ENCODE measurements at regions of chr7 and their contacts with region 1.

Region 1: DNA sequence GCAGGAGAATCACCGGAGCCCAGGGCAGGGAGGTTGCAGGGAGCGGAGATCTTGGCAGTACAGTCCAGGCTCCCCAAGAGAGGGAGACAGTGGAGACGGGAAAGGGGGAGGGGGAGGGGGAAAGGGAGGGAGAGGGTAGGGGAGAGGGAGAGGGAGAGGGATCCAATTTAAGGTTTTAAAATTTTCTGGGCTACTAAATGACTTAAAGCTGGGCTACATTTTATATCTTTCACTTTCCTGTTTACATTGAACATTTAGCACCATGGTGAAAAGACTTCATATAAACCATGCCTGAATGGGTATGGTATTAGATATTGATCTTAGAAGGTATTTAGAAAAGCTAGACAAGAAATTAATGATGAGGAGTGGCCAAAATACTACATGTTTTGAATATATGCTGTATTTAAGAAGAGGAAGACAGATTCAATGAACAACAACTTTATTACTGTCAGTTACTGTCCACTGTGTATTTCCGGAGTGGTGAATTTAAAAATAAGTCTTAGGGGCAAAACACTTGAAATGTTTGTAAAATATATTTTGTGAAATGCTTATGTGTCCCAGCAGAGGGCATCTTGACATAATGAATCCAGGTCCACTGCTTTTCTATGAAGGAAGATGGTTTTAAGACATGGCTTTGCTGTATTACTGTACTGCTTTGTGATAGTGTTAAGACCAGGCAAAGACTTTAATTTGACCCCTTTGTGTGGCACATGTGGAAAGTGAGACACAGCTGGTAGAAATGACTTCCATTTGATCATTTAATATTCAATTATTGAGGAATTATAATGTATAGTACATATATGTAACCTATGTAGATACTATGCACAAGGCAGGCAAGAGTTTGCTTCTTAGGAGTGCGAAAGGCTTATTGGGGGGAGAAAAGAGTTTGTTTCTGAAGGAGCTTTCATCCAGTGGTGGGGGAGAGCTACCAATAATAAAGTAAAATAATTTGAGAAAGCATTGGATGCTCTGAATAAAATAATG is 52.8 kb downstream of the NRF1 start:
- DNase-seq: no peak
- H3K4me3 ChIP-seq: no peak overlapping the region
- H3K27ac ChIP-seq: no peak overlapping the region
- H3K4me1 ChIP-seq: no peaks in the 10 kb centered on the region
- H3K27me3 ChIP-seq: no peaks in the 10 kb centered on the region
- CTCF ChIP-seq: peak in 5 of 6 experiments; percentile 20 to 60 (median 40)
- POLR2A ChIP-seq: no peak

Region 2: GRCh38 chr7:128997181-128997580 is 667.1 kb before region 1 on chr7:
- intact Hi-C with region 1: no loop called
- DNase-seq: no peak
- H3K4me3 ChIP-seq: no peak overlapping the region
- H3K27ac ChIP-seq: no peak overlapping the region
- H3K4me1 ChIP-seq: no peaks in the 10 kb centered on the region
- H3K27me3 ChIP-seq: no peaks in the 10 kb centered on the region
- CTCF ChIP-seq: no peak
- POLR2A ChIP-seq: no peak

Region 3: GRCh38 chr7:129825496-129826267 is 161.4 kb after region 1 on chr7:
- intact Hi-C with region 1: loop called (anchors 10 kb)
- DNase-seq: peak; percentile 37
- H3K4me3 ChIP-seq: peak overlapping the region; percentile 58 to 77 (median 60)
- H3K27ac ChIP-seq: peak overlapping the region; percentile 76 to 85 (median 82)
- H3K4me1 ChIP-seq: peaks cover 11 to 40% (median 14%) of the 10 kb centered on the region in 3 donors
- H3K27me3 ChIP-seq: no peaks in the 10 kb centered on the region
- CTCF ChIP-seq: peak; percentile 56 to 100 (median 65)
- POLR2A ChIP-seq: no peak

Region 4: DNA sequence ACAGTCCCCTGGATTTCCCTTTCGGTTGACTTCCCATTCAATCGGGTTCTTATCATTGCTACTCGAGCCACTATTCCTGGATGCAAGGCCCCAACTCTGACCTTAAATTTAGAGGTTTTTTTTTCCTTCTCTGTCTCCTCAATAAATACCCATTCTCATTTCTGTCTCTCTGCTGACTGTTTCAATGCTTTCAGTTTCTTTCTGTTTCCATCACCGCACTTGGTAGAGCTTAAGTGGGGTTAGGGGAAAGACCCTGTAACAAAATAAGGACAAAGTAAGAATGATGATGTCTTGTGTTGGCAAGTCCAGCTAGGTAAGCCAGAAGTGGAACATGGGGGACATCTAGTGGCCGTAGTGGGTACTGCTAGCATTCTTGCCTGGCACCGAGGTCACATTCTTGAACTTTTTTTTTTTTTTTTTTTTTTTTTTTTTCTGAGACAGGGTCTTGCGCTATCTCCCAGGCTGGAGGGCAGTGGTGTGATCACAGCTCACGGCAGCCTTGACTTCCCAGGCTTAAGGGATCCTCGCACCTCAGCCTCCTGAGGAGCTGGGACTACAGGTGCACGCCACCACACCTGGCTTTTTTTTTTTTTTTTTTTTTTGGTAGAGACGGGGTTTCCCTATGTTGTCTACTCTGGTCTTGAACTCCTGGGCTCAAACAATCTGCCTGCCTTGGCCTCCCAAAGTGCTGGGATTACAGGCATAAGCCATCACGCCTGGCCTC is 346.5 kb after region 1 on chr7:
- intact Hi-C with region 1: loop called (anchors 10 kb)
- DNase-seq: peak; percentile 21
- H3K4me3 ChIP-seq: no peak overlapping the region
- H3K27ac ChIP-seq: peak overlapping the region; percentile 75 to 83 (median 82)
- H3K4me1 ChIP-seq: peaks cover 13 to 30% (median 18%) of the 10 kb centered on the region in 3 donors
- H3K27me3 ChIP-seq: no peaks in the 10 kb centered on the region
- CTCF ChIP-seq: peak; percentile 69 to 95 (median 92)
- POLR2A ChIP-seq: no peak